PC-9 (cell line): ENCODE measurements at regions of chr15 and their contacts with region 1.

Region 1: DNA sequence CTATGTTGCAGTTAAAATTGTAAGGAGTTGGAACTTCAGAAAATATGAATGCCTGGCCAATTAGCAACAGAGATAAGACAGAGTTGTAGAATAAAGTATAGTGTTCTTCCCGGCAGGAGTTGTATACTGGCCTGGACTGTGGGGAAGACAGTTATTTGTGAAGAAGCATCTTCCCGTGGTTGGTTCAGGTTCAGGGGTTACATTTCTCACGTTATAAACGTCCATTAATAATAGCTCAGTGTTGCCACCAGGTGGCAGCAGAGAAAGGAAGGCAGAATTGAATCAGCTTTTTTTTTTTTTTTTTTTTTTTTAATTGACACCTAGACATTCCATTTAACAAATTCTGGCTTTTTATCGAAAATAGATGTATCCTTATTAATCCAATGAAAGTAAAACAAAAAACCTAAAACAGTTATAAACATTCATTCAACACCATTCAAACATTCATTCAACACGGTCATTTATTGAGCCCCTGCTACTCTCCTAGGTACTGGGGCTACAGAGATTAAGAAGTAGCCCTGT is 66.4 kb upstream of the NR2E3 start:
- DNase-seq: peak in 1 of 2 experiments; percentile 37
- H3K4me3 ChIP-seq: no peak overlapping the region
- H3K27ac ChIP-seq: no peak overlapping the region
- H3K4me1 ChIP-seq: peaks cover 29% of the 10 kb centered on the region
- H3K27me3 ChIP-seq: no peaks in the 10 kb centered on the region
- CTCF ChIP-seq: peak; percentile 78

Region 2: DNA sequence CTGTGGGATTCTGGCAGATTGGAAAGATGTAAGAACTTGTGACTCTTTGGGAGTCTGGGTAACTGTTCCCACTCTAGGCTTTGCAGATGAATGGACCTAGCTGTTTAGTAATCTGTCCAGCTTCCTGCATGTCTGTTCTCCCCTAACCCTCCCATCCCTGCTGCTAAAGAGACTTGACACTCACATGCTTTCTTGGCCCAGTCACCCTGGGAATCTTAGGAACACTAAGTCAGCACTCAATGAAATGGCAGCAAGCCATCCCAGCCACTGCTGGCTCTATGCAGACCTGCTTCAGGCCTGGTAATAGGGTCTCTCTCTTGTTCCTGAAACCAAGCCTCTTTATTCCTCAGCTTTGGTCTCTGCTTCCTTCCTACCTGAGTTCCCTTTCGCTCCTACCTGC is 692.4 kb before region 1 on chr15:
- CTCF ChIA-PET with region 1: interaction called, 20 read pairs
- POLR2A ChIA-PET with region 1: no interaction called
- intact Hi-C with region 1: no loop called
- DNase-seq: no peak
- H3K4me3 ChIP-seq: no peak overlapping the region
- H3K27ac ChIP-seq: no peak overlapping the region
- H3K4me1 ChIP-seq: peaks cover 17% of the 10 kb centered on the region; the same call in 1 of the 2 replicates
- H3K27me3 ChIP-seq: no peaks in the 10 kb centered on the region
- CTCF ChIP-seq: no peak

Region 3: DNA sequence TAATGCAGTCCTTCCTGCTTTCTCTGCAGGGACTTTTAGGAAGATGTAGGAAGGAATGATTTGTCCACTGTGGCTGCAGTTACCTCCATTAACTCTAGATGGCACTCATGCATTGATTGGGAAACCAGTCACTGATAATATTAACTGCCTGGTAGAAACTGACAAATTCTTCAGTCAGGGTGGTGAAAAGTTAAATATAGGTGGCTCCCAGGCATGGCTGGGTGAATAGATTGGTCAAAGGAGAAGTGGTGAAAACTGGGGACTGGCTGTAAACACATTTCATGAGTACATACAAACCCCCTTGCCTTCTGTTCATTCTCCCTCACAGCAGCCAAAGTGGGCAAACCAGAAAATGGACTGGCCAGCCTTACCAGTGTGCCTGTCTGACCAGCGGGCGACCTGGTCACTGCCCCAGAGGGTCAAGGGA is 295.2 kb before region 1 on chr15:
- CTCF ChIA-PET with region 1: no interaction called
- POLR2A ChIA-PET with region 1: interaction called, 28 read pairs
- intact Hi-C with region 1: loop called (anchors 5 kb)
- DNase-seq: peak; percentile 47
- H3K4me3 ChIP-seq: no peak overlapping the region
- H3K27ac ChIP-seq: no peak overlapping the region
- H3K4me1 ChIP-seq: peaks cover 46% of the 10 kb centered on the region
- H3K27me3 ChIP-seq: no peaks in the 10 kb centered on the region
- CTCF ChIP-seq: peak; percentile 83

Region 4: GRCh38 chr15:71691458-71692417 is 52.2 kb before region 1 on chr15:
- CTCF ChIA-PET with region 1: interaction called, 11 read pairs
- POLR2A ChIA-PET with region 1: no interaction called
- intact Hi-C with region 1: no loop called
- DNase-seq: peak; percentile 51 to 68
- H3K4me3 ChIP-seq: no peak overlapping the region
- H3K27ac ChIP-seq: peak overlapping the region; percentile 34; the same call in 1 of the 2 replicates
- H3K4me1 ChIP-seq: peaks cover 10% of the 10 kb centered on the region
- H3K27me3 ChIP-seq: no peaks in the 10 kb centered on the region
- CTCF ChIP-seq: no peak

Region 5: DNA sequence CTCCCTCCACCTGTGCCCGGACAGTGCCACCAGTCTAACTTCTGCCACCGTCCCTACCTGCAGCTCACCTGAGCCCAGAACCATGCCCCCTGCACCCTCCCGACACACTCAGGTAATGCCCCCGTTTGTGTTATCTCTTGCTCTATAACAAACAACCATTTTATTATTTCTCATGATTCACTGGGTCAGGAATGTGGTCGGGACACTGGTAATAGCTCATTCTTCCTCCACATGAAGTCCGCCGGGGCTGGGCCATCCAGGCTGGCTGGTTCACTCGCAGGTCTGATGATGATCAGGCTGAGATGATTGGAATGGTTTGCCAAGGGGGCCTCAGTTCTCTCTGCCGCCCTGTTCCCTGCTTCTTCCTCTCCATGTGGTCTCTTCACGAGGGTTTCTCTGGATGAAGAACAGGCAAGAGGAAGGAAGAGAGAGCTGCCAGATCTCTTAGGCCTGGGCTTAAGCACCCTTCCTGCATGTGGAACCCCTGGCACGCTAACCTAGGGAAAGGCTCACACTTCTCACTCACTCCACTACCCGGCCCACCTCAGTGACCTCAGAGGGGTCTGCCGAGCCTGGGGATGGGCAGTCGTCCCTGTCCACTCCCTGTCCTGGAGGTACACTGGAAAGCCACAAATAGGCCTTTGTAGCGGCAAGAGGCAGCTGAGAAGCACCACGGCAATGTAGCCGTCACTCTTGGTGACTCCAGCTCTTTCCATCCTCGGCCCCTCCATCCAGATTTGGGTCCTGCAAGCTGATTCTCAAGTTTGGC is 46.3 kb after region 1 on chr15:
- CTCF ChIA-PET with region 1: interaction called, 13 read pairs
- POLR2A ChIA-PET with region 1: interaction called, 5 read pairs
- intact Hi-C with region 1: loop called (anchors 2 kb)
- DNase-seq: peak; percentile 79 to 88
- H3K4me3 ChIP-seq: no peak overlapping the region
- H3K27ac ChIP-seq: peak overlapping the region; percentile 95
- H3K4me1 ChIP-seq: peaks cover 46% of the 10 kb centered on the region
- H3K27me3 ChIP-seq: no peaks in the 10 kb centered on the region
- CTCF ChIP-seq: no peak

Region 6: GRCh38 chr15:71916834-71917233 is 172.9 kb after region 1 on chr15:
- CTCF ChIA-PET with region 1: no interaction called
- POLR2A ChIA-PET with region 1: no interaction called
- intact Hi-C with region 1: no loop called
- DNase-seq: no peak
- H3K4me3 ChIP-seq: no peak overlapping the region
- H3K27ac ChIP-seq: no peak overlapping the region
- H3K4me1 ChIP-seq: no peaks in the 10 kb centered on the region
- H3K27me3 ChIP-seq: no peaks in the 10 kb centered on the region
- CTCF ChIP-seq: no peak

Region 7: GRCh38 chr15:71971905-71972304 is 228.0 kb after region 1 on chr15:
- CTCF ChIA-PET with region 1: interaction called, 4 read pairs
- POLR2A ChIA-PET with region 1: no interaction called
- intact Hi-C with region 1: loop called (anchors 1 kb)
- DNase-seq: peak; percentile 46 to 57
- H3K4me3 ChIP-seq: no peak overlapping the region
- H3K27ac ChIP-seq: peak overlapping the region; percentile 23; the same call in 1 of the 2 replicates
- H3K4me1 ChIP-seq: peaks cover 53% of the 10 kb centered on the region
- H3K27me3 ChIP-seq: no peaks in the 10 kb centered on the region
- CTCF ChIP-seq: no peak

Region 8: GRCh38 chr15:72199711-72200212 is 455.8 kb after region 1 on chr15:
- CTCF ChIA-PET with region 1: interaction called, 11 read pairs
- POLR2A ChIA-PET with region 1: no interaction called
- intact Hi-C with region 1: no loop called
- DNase-seq: peak; percentile 62 to 82
- H3K4me3 ChIP-seq: no peak overlapping the region
- H3K27ac ChIP-seq: 0 out of 2 replicates have a peak overlapping the region, but pooled peaks have one; percentile 10
- H3K4me1 ChIP-seq: peaks cover 9% of the 10 kb centered on the region
- H3K27me3 ChIP-seq: no peaks in the 10 kb centered on the region
- CTCF ChIP-seq: peak; percentile 90